ENCODE measurements at regions of chr17 and their contacts with region 1.

Region 1: GRCh38 chr17:48830840-48831548 is at the start of gene CALCOCO2:
- DNase-seq: peak; percentile 97
- H3K4me3 ChIP-seq: peak within 1 kb of the TSS; percentile 80 to 92 (median 86)
- H3K27ac ChIP-seq: peak within 1 kb of the TSS; percentile 93 to 97 (median 94)
- H3K4me1 ChIP-seq: peaks cover 0 to 41% (median 35%) of the 10 kb centered on the region in 4 donors
- H3K27me3 ChIP-seq: no peaks in the 10 kb centered on the region
- CTCF ChIP-seq: no peak
- EP300 ChIP-seq: no peak
- POLR2A ChIP-seq: peak; percentile 75 to 78
- total RNA-seq, gene CALCOCO2: 130 to 198 (median 146) TPM

Region 2: DNA sequence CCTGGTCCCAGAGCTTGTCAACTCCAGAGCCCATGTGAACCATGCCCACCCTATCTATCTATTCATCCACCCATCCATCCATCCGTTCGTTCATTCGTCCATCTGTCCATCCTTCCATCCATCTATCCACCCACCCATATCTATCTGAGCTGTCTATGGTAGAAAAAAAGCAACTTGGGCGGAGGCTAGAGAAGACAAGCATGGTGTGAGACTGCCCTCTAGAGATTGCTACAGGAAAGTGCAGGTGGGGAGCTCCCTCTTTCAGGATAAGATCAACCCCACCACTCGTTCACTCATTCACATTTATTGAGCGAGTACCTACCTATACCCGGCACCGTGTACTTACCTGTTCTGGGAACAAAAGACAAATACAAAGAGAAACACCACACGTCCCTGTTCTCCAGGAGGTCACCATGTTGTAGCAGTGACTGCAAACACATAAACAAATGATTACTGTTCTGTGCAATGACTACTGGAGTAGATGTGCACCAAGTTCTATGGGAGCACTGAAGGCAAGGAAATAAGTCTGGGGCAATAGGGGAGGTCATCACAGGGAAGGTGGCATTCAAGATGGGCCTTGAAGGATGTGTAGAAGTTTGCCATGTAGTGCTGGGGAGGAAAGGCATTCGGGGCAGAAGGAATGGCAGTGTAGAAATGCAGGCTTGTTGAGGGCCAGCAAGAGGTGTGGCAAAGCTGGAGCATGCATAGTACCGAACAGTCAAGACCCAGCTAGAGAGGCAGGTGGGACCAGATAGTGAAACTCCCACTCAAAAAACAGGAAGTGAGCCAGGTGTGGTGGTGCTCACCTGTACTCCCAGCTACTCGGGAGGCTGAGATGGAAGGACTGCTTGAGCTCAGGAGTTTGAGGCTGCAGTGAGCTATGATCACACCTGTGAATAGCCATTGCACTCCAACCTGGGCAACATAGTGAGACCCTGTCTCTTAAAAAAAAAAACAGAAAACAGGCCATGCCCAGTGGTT is 48.2 kb after region 1 on chr17:
- intact Hi-C with region 1: no loop called
- DNase-seq: no peak
- H3K4me3 ChIP-seq: no peak overlapping the region
- H3K27ac ChIP-seq: no peak overlapping the region
- H3K4me1 ChIP-seq: no peaks in the 10 kb centered on the region
- H3K27me3 ChIP-seq: no peaks in the 10 kb centered on the region
- CTCF ChIP-seq: peak; percentile 74 to 98 (median 92)
- EP300 ChIP-seq: no peak
- POLR2A ChIP-seq: no peak

Region 3: GRCh38 chr17:48892940-48893645 is 62.1 kb after region 1 on chr17:
- intact Hi-C with region 1: loop called (anchors 2 kb)
- DNase-seq: no peak
- H3K4me3 ChIP-seq: peak overlapping the region; percentile 70 to 90 (median 77)
- H3K27ac ChIP-seq: peak overlapping the region; percentile 80 to 85 (median 84)
- H3K4me1 ChIP-seq: peaks cover 0 to 21% (median 17%) of the 10 kb centered on the region in 4 donors
- H3K27me3 ChIP-seq: no peaks in the 10 kb centered on the region
- CTCF ChIP-seq: no peak
- EP300 ChIP-seq: no peak
- POLR2A ChIP-seq: no peak

Region 4: GRCh38 chr17:48915459-48916282 is 84.7 kb after region 1 on chr17:
- intact Hi-C with region 1: no loop called
- DNase-seq: no peak
- H3K4me3 ChIP-seq: no peak overlapping the region
- H3K27ac ChIP-seq: peak overlapping the region in 2 of 4 donors; percentile 29 to 69
- H3K4me1 ChIP-seq: peaks cover 0 to 30% (median 27%) of the 10 kb centered on the region in 4 donors
- H3K27me3 ChIP-seq: no peaks in the 10 kb centered on the region
- CTCF ChIP-seq: no peak
- EP300 ChIP-seq: no peak
- POLR2A ChIP-seq: no peak

Measured in sigmoid colon (tissue), 7 donors.